CD4-positive, alpha-beta memory T cell (primary cell): ENCODE measurements at regions of chr1 and their contacts with region 1.

Region 1: DNA sequence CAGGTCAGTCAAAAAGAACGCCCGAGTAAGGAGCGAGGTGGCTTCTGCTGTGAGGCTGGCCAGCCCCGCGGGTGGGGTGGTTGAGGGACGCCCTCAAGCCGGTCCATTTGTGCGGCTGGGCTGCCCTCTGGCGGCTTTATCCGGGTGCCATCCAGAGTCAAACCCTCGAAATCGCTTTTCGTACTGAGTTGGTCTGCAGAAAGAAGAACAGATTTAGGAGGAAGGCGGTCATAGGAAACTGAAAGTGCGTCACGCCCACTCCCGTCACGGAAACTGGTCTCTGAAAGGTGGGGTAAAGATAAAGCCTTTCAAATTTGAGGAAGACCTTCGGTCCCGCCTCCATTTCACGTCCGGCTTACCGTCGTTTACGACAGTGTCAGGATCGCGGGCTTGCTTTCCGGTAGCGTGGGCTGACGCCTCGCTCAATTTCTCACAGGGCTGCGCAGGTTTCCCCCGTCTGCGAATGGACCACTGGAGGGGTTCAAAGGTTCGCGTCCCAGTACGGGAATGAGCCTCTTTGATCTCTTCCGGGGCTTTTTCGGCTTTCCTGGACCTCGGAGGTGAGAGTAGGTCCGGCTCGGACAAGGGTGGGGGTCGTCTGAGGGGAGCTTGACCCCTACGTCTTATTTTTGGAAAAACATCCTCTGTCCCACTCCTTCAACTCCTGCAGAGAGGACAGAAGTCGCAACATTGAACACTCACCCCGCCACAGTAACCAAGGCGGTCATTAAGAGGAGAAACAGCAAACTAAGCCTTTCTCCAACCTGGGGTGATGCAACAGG is at the start of gene HAX1:
- DNase-seq: peak; percentile 93 to 99 (median 98)
- H3K4me3 ChIP-seq: peak within 1 kb of the TSS; percentile 66 to 85
- H3K4me3 Mint-ChIP-seq: peak within 1 kb of the TSS; percentile 89 to 98 (median 97)
- H3K27ac ChIP-seq: peak within 1 kb of the TSS; percentile 88
- H3K27ac Mint-ChIP-seq: peak within 1 kb of the TSS; percentile 97 to 99 (median 99)
- H3K4me1 ChIP-seq: peaks cover 27% of the 10 kb centered on the region
- H3K4me1 Mint-ChIP-seq: peaks cover 22 to 38% (median 29%) of the 10 kb centered on the region in 4 donors
- H3K27me3 ChIP-seq: no peaks in the 10 kb centered on the region
- H3K27me3 Mint-ChIP-seq: no peaks in the 10 kb centered on the region
- total RNA-seq, gene HAX1: 110 to 121 TPM

Region 2: GRCh38 chr1:153796791-153797659 is 475.4 kb before region 1 on chr1:
- CTCF ChIA-PET with region 1: interaction called, 3 read pairs
- POLR2A ChIA-PET with region 1: no interaction called
- intact Hi-C with region 1: loop called (anchors 1 kb)
- DNase-seq: peak; percentile 76 to 85 (median 80)
- H3K4me3 ChIP-seq: no peak overlapping the region
- H3K4me3 Mint-ChIP-seq: no peak overlapping the region
- H3K27ac ChIP-seq: no peak overlapping the region
- H3K27ac Mint-ChIP-seq: peak overlapping the region; percentile 8 to 79 (median 65)
- H3K4me1 ChIP-seq: no peaks in the 10 kb centered on the region
- H3K4me1 Mint-ChIP-seq: peaks cover 0 to 16% (median 8%) of the 10 kb centered on the region in 4 donors
- H3K27me3 ChIP-seq: no peaks in the 10 kb centered on the region
- H3K27me3 Mint-ChIP-seq: no peaks in the 10 kb centered on the region

Region 3: DNA sequence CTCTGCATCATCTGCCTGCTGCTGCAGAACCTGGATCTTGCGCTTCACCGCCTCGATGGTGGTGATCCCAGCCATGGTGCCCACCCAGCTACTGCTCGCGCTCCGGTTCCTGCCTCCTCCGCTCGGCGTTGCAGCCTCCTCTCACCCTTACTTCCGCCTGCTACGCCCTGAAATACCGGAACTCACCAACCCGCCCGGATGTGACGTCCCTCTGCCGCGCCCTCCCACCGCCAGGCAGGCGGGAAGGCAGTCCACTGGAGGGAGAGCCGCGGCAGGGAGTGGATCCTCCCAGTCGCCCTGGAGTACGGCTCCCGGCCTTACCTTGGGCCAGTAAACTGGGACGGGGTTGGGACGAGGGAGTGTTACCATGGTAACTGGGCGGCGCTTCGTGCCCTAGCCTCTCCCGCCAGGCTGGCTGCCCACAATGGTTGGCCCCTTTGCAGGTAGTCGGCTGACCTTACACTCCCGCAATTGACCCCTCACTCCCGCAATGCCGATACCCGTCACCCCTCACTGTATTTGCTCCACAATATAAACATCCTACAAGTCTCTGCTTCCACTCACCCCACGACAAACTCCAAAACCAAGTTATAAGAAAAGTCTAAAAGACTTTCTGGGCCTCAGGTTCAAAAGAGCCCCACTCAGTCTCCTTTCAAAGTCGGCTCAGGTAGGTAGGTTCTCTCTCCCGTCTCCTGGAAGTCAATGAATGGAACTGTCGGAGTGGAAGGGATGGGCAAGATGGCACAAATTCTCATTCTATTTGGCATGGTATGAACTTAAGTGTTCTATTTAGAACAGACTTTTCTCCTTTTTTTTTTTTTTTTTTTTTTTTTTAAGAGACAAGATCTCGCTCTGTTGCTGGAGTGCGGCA is 89.1 kb before region 1 on chr1:
- CTCF ChIA-PET with region 1: no interaction called
- POLR2A ChIA-PET with region 1: interaction called, 3 read pairs
- intact Hi-C with region 1: loop called (anchors 1 kb)
- DNase-seq: peak; percentile 91 to 96 (median 92)
- H3K4me3 ChIP-seq: peak overlapping the region; percentile 74 to 90
- H3K4me3 Mint-ChIP-seq: peak overlapping the region; percentile 99 to 100 (median 100)
- H3K27ac ChIP-seq: peak overlapping the region; percentile 93
- H3K27ac Mint-ChIP-seq: peak overlapping the region; percentile 98 to 100 (median 100)
- H3K4me1 ChIP-seq: peaks cover 42% of the 10 kb centered on the region
- H3K4me1 Mint-ChIP-seq: peaks cover 34 to 62% (median 46%) of the 10 kb centered on the region in 4 donors
- H3K27me3 ChIP-seq: no peaks in the 10 kb centered on the region
- H3K27me3 Mint-ChIP-seq: no peaks in the 10 kb centered on the region

Region 4: GRCh38 chr1:154220071-154220969 is 52.1 kb before region 1 on chr1 and contains the start of gene UBAP2L:
- CTCF ChIA-PET with region 1: interaction called, 6 read pairs
- POLR2A ChIA-PET with region 1: interaction called, 7 read pairs
- intact Hi-C with region 1: loop called (anchors 1 kb)
- DNase-seq: peak; percentile 97 to 99 (median 99)
- H3K4me3 ChIP-seq: peak within 1 kb of the TSS; percentile 93 to 99
- H3K4me3 Mint-ChIP-seq: peak within 1 kb of the TSS; percentile 92 to 100 (median 97)
- H3K27ac ChIP-seq: peak within 1 kb of the TSS; percentile 97
- H3K27ac Mint-ChIP-seq: peak within 1 kb of the TSS; percentile 96 to 99 (median 99)
- H3K4me1 ChIP-seq: peaks cover 66% of the 10 kb centered on the region
- H3K4me1 Mint-ChIP-seq: peaks cover 52 to 78% (median 65%) of the 10 kb centered on the region in 4 donors
- H3K27me3 ChIP-seq: no peaks in the 10 kb centered on the region
- H3K27me3 Mint-ChIP-seq: no peaks in the 10 kb centered on the region
- total RNA-seq, gene UBAP2L: 180 to 189 TPM

Region 5: GRCh38 chr1:154344977-154345837 is 72.8 kb after region 1 on chr1:
- CTCF ChIA-PET with region 1: interaction called, 17 read pairs
- POLR2A ChIA-PET with region 1: interaction called, 30 read pairs
- intact Hi-C with region 1: loop called (anchors 2 kb)
- DNase-seq: peak; percentile 75 to 84 (median 81)
- H3K4me3 ChIP-seq: peak overlapping the region; percentile 62
- H3K4me3 Mint-ChIP-seq: peak overlapping the region; percentile 87 to 99 (median 94)
- H3K27ac ChIP-seq: peak overlapping the region; percentile 66
- H3K27ac Mint-ChIP-seq: peak overlapping the region; percentile 86 to 98 (median 92)
- H3K4me1 ChIP-seq: peaks cover 96% of the 10 kb centered on the region
- H3K4me1 Mint-ChIP-seq: peaks cover 54 to 98% (median 76%) of the 10 kb centered on the region in 4 donors
- H3K27me3 ChIP-seq: no peaks in the 10 kb centered on the region
- H3K27me3 Mint-ChIP-seq: no peaks in the 10 kb centered on the region

Region 6: GRCh38 chr1:154468535-154469250 is 196.3 kb after region 1 on chr1:
- CTCF ChIA-PET with region 1: interaction called, 5 read pairs
- POLR2A ChIA-PET with region 1: interaction called, 3 read pairs
- intact Hi-C with region 1: loop called (anchors 1 kb)
- DNase-seq: no peak
- H3K4me3 ChIP-seq: no peak overlapping the region
- H3K4me3 Mint-ChIP-seq: peak overlapping the region in 6 of 8 donors; percentile 57 to 91 (median 72)
- H3K27ac ChIP-seq: peak overlapping the region; percentile 23
- H3K27ac Mint-ChIP-seq: peak overlapping the region; percentile 93 to 100 (median 97)
- H3K4me1 ChIP-seq: peaks cover 58% of the 10 kb centered on the region
- H3K4me1 Mint-ChIP-seq: peaks cover 47 to 66% (median 60%) of the 10 kb centered on the region in 4 donors
- H3K27me3 ChIP-seq: no peaks in the 10 kb centered on the region
- H3K27me3 Mint-ChIP-seq: no peaks in the 10 kb centered on the region